ENCODE measurements at regions of chr13 and their contacts with region 1.

Region 1: GRCh38 chr13:68748038-68748437 is 1359.6 kb upstream of the ATXN8OS start:
- DNase-seq: peak; percentile 72
- ATAC-seq: peak; percentile 81
- H3K4me3 ChIP-seq: peak overlapping the region; percentile 24; the same call in 1 of the 2 replicates
- H3K27ac ChIP-seq: peak overlapping the region; percentile 69
- H3K4me1 ChIP-seq: peaks cover 28% of the 10 kb centered on the region
- H3K27me3 ChIP-seq: no peaks in the 10 kb centered on the region
- CTCF ChIP-seq: no peak

Region 2: GRCh38 chr13:68145852-68146251 is 602.2 kb before region 1 on chr13:
- CTCF ChIA-PET with region 1: no interaction called
- POLR2A ChIA-PET with region 1: no interaction called
- intact Hi-C with region 1: no loop called
- DNase-seq: no peak
- ATAC-seq: no peak
- H3K4me3 ChIP-seq: no peak overlapping the region
- H3K27ac ChIP-seq: no peak overlapping the region
- H3K4me1 ChIP-seq: no peaks in the 10 kb centered on the region
- H3K27me3 ChIP-seq: no peaks in the 10 kb centered on the region
- CTCF ChIP-seq: no peak

Region 3: GRCh38 chr13:68608147-68608546 is 139.9 kb before region 1 on chr13:
- CTCF ChIA-PET with region 1: no interaction called
- POLR2A ChIA-PET with region 1: no interaction called
- intact Hi-C with region 1: loop called (anchors 2 kb)
- DNase-seq: peak; percentile 48
- ATAC-seq: peak; percentile 96
- H3K4me3 ChIP-seq: no peak overlapping the region
- H3K27ac ChIP-seq: no peak overlapping the region
- H3K4me1 ChIP-seq: no peaks in the 10 kb centered on the region
- H3K27me3 ChIP-seq: no peaks in the 10 kb centered on the region
- CTCF ChIP-seq: no peak

Region 4: DNA sequence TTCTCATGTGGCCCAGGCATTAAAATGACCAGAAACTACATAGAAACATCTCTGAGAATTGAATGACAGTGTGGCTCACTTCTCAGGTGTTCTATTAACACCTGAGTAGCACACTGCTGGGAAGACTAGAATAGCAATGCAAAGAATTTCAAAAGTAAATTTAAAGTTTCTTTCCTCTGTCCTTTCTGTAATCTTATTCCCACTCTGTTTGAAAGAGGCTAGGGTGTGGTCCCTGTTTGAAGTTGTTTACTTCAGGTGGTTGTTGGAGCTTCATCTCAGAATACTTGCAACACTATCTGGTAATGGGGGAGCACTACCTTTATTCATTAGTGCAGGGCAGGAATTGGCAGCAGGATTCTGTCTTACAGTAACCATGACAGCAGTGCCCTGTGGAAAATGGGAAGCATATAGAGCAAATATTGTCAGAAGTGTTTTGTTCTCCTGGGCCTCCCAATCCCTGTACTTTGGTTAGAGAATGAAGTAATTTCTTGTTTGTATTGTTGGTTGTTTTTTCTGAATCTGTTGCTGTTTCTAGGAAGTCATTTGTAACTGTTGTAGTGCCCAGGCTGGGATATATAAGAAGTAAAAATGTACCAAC is 149.4 kb after region 1 on chr13:
- CTCF ChIA-PET with region 1: no interaction called
- POLR2A ChIA-PET with region 1: no interaction called
- intact Hi-C with region 1: loop called (anchors 10 kb)
- DNase-seq: no peak
- ATAC-seq: no peak
- H3K4me3 ChIP-seq: no peak overlapping the region
- H3K27ac ChIP-seq: no peak overlapping the region
- H3K4me1 ChIP-seq: no peaks in the 10 kb centered on the region
- H3K27me3 ChIP-seq: no peaks in the 10 kb centered on the region
- CTCF ChIP-seq: no peak